Activated CD4-positive, alpha-beta T cell treated with anti-CD3 and anti-CD28 coated beads for 36 hours (primary cell): ENCODE measurements at regions of chr1 and their contacts with region 1.

Region 1: GRCh38 chr1:53860967-53861411 is 22.9 kb upstream of the NDC1 start:
- DNase-seq: peak; percentile 65
- ATAC-seq: peak; percentile 88
- H3K4me3 Mint-ChIP-seq: no peak overlapping the region
- H3K27ac Mint-ChIP-seq: no peak overlapping the region
- H3K4me1 Mint-ChIP-seq: peaks cover 12% of the 10 kb centered on the region
- H3K27me3 Mint-ChIP-seq: no peaks in the 10 kb centered on the region

Region 2: DNA sequence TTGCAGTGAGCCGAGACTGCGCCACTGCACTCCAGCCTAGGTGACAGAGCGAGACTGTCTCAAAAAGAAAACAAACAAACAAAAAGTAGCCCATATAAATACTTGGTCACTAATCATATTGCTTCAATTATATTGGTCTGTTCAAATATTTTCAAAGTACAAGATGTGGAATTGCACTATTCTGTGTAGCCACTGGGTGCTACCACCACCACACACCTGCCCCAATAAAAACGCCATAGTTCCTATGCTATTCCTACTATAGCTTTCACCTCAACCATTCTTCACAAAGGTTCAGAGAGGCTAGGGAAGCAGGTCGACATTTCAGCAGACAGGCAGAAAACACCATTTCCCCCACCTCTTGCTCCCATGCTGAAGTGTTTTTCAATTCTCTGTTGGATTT is 39.6 kb before region 1 on chr1:
- CTCF ChIA-PET with region 1: no interaction called
- POLR2A ChIA-PET with region 1: no interaction called
- intact Hi-C with region 1: no loop called
- DNase-seq: no peak
- ATAC-seq: no peak
- H3K4me3 Mint-ChIP-seq: no peak overlapping the region
- H3K27ac Mint-ChIP-seq: no peak overlapping the region
- H3K4me1 Mint-ChIP-seq: no peaks in the 10 kb centered on the region
- H3K27me3 Mint-ChIP-seq: no peaks in the 10 kb centered on the region

Region 3: GRCh38 chr1:53878492-53879105 is 17.6 kb after region 1 on chr1:
- CTCF ChIA-PET with region 1: interaction called, 35 read pairs
- POLR2A ChIA-PET with region 1: no interaction called
- intact Hi-C with region 1: no loop called
- DNase-seq: no peak
- ATAC-seq: peak; percentile 36
- H3K4me3 Mint-ChIP-seq: no peak overlapping the region
- H3K27ac Mint-ChIP-seq: no peak overlapping the region
- H3K4me1 Mint-ChIP-seq: peaks cover 4% of the 10 kb centered on the region
- H3K27me3 Mint-ChIP-seq: no peaks in the 10 kb centered on the region

Region 4: DNA sequence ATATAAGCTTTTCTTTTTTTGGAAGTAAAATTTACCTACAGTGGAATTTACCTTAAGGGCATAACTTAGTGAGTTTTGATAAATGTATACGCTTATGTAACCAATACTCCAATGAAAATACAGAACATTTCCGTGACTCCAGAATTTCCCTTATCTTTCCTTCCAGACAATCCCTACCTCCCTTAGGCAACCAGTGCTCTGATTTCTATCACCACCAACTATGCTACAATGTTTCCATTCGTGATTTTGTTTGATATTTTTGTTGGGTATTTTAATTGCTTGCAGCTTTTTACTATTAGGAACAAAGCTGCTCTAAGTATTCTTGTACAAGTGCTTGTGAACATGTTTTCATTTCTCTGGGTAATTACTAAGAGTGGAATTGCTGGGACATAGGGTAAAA is 69.9 kb after region 1 on chr1:
- CTCF ChIA-PET with region 1: interaction called, 12 read pairs
- POLR2A ChIA-PET with region 1: no interaction called
- intact Hi-C with region 1: no loop called
- DNase-seq: no peak
- ATAC-seq: no peak
- H3K4me3 Mint-ChIP-seq: no peak overlapping the region
- H3K27ac Mint-ChIP-seq: no peak overlapping the region
- H3K4me1 Mint-ChIP-seq: no peaks in the 10 kb centered on the region
- H3K27me3 Mint-ChIP-seq: no peaks in the 10 kb centered on the region

Region 5: GRCh38 chr1:53959664-53960250 is 98.8 kb after region 1 on chr1:
- CTCF ChIA-PET with region 1: interaction called, 159 read pairs
- POLR2A ChIA-PET with region 1: interaction called, 3 read pairs
- intact Hi-C with region 1: loop called (anchors 1 kb)
- DNase-seq: no peak
- ATAC-seq: no peak
- H3K4me3 Mint-ChIP-seq: no peak overlapping the region
- H3K27ac Mint-ChIP-seq: no peak overlapping the region
- H3K4me1 Mint-ChIP-seq: peaks cover 11% of the 10 kb centered on the region
- H3K27me3 Mint-ChIP-seq: no peaks in the 10 kb centered on the region

Region 6: GRCh38 chr1:54037476-54037875 is 176.5 kb after region 1 on chr1:
- CTCF ChIA-PET with region 1: interaction called, 12 read pairs
- POLR2A ChIA-PET with region 1: no interaction called
- intact Hi-C with region 1: no loop called
- DNase-seq: no peak
- ATAC-seq: no peak
- H3K4me3 Mint-ChIP-seq: no peak overlapping the region
- H3K27ac Mint-ChIP-seq: no peak overlapping the region
- H3K4me1 Mint-ChIP-seq: no peaks in the 10 kb centered on the region
- H3K27me3 Mint-ChIP-seq: no peaks in the 10 kb centered on the region

Region 7: DNA sequence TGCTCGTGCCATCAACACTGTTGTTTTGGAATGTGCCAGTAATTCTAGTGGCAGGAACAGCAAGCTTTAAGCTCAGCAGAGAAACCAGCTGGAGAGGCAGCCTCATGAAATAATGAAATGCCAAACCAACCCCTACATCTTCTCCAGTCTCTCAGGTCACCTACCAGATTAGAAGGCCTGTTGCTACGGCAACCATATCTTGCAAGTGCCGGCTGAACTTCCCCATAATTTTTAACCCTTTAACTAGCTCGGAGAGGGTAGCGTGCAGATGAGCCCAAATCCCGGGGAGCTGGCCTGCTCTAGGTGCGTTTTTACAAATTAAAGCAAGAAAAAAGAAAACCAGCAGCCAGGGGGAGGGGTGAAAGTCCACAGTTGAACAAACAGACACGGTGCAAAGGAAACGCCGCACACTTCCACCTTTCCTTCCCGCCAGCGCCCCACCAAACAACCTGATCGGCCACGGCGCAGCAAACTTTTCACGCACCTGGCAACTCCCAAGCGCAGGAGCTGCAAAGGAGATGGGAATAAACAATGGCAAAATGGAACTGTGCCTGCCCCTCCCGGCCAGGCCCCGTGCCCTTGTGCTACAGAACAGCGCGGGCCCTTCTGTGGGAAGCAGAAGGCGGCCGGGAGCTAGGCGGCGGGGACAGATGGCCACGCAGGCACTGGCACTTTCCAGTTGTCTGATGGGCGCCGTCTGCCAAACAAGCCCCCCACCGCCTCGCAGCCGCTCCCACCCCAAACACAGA is 495.1 kb after region 1 on chr1:
- CTCF ChIA-PET with region 1: no interaction called
- POLR2A ChIA-PET with region 1: no interaction called
- intact Hi-C with region 1: no loop called
- DNase-seq: peak; percentile 33
- ATAC-seq: no peak
- H3K4me3 Mint-ChIP-seq: peak overlapping the region; percentile 77
- H3K27ac Mint-ChIP-seq: peak overlapping the region; percentile 95
- H3K4me1 Mint-ChIP-seq: peaks cover 89% of the 10 kb centered on the region
- H3K27me3 Mint-ChIP-seq: no peaks in the 10 kb centered on the region